ENCODE measurements at regions of chr22 and their contacts with region 1.

Region 1: DNA sequence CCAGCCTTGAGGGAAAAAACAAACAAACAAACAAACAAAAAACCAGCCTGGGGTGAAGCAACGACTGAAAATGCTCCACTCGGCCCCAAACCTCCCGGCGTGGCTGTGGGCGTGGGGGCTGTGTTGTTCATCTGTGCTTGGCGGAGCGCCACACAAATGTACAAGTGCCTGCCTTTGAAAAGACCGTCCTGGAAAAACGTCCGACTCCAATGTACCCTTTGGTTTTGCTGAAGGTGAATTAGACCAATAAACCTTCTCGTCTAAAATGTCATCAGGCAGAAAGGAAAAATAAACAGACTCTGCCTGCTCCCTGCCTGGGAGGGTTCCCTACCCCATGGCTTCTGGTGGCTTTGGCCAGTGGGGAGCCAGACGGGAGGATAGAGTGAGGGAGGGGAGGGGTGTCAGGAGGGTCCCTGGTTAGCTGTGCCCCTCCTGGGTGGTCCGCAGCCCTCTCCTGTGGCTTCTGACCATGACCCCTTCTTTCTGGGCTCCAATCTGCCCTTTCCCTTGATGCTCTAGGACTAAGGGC is 93.9 kb downstream of the TRMU start:
- DNase-seq: no peak
- ATAC-seq: no peak
- H3K4me3 ChIP-seq: no peak overlapping the region
- H3K27ac ChIP-seq: no peak overlapping the region
- H3K4me1 ChIP-seq: peaks cover 0 to 5% (median 0%) of the 10 kb centered on the region in 12 donors
- H3K27me3 ChIP-seq: no peaks in the 10 kb centered on the region
- CTCF ChIP-seq: no peak
- POLR2A ChIP-seq: no peak

Region 2: DNA sequence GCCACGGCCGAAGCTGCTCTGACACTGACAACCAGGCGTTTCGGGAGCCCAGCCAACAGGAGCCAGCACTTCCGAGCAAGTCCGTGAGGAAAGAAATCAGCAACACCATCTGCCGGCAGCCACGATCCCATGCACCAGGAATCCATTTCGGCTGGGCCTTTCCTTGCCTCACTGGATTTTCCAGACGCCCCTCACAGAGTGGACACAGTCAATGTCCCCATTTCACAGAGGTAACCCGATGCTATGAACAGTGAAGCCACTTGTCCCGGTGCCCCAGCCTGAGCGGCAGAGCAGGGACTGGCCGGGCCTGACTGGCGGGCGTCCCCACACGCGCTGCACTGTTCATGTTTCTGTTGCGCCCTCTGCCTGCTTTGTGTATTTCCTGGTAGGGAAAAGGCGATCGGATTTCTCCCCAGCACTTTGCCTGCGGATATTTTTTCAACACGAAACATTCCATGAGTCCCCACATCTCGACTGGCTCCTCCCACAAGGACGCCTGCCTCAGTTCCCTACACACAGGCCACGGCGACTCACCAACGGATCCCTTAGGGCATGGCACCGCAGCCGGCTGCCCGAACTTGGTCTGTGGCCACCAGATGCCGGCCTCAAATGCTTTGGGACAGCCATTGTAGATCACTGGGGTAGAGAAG is 38.6 kb before region 1 on chr22:
- intact Hi-C with region 1: loop called in 1 of 10 experiments (anchors 2 kb)
- DNase-seq: peak; percentile 63 to 78 (median 76)
- ATAC-seq: peak; percentile 24 to 82 (median 69)
- H3K4me3 ChIP-seq: peak overlapping the region in 3 of 12 donors; percentile 9 to 42 (median 41)
- H3K27ac ChIP-seq: peak overlapping the region in 3 of 12 donors; percentile 20 to 49 (median 32)
- H3K4me1 ChIP-seq: peaks cover 0 to 8% (median 1%) of the 10 kb centered on the region in 12 donors
- H3K27me3 ChIP-seq: no peaks in the 10 kb centered on the region
- CTCF ChIP-seq: peak in 10 of 12 donors; percentile 9 to 67 (median 34)
- POLR2A ChIP-seq: no peak

Region 3: GRCh38 chr22:46471901-46472721 is 42.7 kb after region 1 on chr22:
- intact Hi-C with region 1: no loop called
- DNase-seq: peak in 1 of 5 donors; percentile 27
- ATAC-seq: peak in 2 of 4 donors; percentile 16 to 54
- H3K4me3 ChIP-seq: no peak overlapping the region
- H3K27ac ChIP-seq: no peak overlapping the region
- H3K4me1 ChIP-seq: no peaks in the 10 kb centered on the region
- H3K27me3 ChIP-seq: peaks cover 0 to 7% (median 0%) of the 10 kb centered on the region in 9 donors
- CTCF ChIP-seq: no peak
- POLR2A ChIP-seq: no peak

Measured in heart left ventricle (tissue), 16 donors.